Right ventricle myocardium inferior (tissue), 1 donor: ENCODE measurements at regions of chr5 and their contacts with region 1.

Region 1: DNA sequence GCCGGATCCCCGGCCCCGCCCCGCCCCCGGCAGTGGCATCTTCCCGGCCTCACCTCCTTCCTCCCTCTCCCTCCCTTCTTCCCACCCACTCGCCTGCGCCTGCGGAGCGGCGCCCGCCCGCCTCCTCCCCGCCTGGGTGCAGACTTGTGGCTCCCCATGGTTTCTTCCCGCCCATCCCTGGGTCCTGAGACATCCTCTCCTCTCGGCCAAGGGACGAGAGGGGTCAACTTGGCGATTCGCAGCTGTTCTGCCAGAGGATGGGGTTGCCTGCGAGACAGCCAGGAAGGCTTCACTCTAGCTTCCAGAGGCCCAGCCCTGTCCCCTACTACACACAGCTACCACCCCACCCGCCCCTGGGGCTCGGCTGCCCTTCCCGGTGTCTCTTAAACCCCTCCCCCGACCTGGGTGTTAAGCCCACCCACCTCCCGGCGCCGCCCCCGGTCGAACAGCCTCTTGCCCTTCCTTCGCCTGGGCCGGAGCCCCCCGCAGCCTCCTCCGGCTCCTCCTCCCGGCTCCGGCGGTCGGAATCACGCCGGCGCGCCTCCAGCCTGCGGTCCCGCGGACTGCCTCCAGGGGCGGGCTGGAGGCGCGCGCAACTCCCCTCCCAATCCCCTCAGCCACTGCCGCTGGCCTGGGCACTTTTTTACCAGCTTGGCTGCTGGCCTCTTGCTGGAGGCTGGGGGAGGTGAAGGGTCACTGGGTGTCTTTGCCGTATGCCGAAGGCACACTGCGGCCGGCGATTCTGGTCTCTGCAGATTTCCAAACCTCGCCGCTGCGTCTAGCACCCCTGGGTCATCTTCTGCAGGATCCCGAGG is 1.9 kb downstream of the JADE2 start:
- DNase-seq: peak; percentile 93
- ATAC-seq: peak; percentile 67

Region 2: DNA sequence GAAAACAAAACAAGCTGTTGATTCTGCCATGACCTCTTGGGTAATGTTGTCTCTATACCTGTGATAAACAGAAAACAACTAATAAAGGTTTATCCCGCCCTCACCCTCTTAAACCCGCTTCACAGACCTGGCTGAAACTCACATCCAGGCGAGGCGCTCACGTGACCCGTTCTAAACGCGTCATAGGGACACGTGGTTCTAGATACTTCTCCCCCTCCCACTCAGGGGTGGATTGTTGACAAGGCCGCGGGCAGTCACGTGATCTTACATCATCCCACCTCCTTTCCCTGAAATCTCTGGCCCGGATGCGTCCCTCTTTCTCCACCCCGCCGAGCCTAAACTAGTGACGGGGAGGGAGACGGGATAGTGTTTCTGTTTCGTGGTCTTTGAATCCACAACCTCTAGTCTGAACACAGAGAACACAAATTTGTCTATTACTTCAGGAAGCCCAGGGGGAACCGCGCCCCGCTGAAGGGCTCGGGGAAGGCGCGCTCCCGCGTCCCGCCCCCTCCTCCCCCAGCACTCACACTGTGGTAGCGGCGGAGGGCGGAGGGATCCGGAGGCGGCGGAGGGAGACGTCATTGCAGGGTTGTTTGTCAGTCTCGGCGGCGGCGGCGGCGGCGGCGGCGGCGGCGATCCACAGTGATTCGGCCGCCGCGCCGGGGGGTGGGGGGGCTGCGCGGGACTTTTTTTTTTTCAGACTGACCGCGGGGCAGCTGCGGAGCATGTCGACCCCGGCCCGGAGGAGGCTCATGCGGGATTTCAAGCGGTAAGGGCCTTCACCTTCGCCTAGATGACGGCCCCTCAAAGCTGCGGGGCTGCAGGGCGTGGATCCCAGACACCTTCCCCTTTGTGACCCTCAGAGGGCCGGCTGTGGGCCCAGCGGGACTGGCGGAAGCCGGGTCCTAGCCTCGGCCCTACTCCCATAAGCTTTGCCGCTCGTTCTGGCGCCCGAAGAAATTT is 156.2 kb before region 1 on chr5 and contains the start of gene UBE2B:
- intact Hi-C with region 1: loop called (anchors 2 kb)
- DNase-seq: peak; percentile 98
- ATAC-seq: peak; percentile 94
- total RNA-seq, gene UBE2B: 258 TPM

Region 3: DNA sequence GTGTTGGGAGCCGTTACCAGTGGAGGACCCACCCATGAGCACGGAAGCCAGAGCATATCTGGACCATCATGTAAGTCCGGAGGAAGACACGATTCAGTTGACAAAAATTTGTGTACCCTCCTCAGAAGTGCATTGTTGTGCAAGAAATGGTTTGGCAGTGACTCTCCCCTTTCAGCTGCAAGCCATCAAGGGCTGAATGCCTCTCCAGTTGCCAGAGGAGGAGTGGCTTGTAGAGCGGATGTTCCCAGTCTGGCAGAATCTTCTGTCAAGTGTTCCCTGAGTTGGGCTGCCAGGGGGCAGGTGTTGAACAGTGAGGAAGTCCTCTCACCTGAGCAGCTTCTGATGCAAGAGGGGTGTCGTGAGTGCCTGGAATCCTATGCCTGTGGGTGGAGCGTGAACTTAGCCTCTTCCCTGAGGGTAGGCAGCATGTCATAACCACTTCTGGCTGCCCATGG is 88.1 kb before region 1 on chr5:
- intact Hi-C with region 1: loop called (anchors 1 kb)
- DNase-seq: peak; percentile 77
- ATAC-seq: peak; percentile 84

Region 4: DNA sequence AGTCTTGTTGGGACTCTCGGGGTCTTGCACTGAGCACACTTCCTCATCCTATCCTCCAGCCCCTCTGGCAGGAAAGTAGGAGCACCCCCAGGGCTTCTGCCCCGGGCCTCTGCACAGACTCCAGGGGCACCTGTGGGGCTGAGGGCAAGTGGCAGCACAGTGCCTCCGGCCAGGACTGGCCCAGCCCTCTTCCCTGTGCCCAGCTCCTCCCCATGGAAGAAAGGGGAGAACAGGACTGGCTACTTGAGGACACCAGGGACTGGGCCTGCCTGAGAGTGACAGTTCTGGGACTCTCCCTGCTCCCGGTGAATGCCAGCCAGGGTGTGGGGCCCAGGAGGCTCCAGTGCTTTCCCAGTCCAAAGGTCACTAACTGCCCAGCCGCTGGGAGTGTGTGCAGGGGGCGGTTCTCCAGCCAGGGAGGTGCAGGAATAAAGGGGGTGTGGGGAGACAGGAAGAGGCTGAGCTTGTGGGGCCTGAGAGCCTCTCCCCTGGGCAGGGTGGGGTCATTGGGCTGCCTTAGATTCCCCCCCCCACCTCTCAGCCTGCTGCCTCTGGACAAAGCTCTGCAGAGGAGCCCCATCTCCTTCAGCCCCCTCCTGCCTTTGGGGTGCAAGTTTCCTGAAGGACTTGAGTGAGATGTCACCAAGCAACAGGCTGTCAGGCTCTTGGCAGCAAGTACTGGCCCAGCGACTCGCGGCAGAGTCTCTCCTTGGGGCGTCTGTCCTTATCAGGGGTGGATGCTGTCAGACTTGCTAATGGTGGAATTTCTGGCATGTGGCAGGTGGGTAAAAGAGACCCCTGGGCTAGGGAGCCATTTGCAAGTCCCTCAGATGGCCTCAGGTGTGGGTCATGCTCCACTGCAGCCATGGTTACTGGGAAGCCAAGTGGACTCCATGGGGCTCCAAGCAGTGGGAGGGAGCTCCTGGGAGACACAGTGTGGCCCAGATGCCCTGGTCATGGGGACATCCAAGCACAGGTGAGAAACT is 21.0 kb before region 1 on chr5:
- intact Hi-C with region 1: loop called (anchors 2 kb)
- DNase-seq: peak; percentile 84
- ATAC-seq: peak; percentile 93

Region 5: DNA sequence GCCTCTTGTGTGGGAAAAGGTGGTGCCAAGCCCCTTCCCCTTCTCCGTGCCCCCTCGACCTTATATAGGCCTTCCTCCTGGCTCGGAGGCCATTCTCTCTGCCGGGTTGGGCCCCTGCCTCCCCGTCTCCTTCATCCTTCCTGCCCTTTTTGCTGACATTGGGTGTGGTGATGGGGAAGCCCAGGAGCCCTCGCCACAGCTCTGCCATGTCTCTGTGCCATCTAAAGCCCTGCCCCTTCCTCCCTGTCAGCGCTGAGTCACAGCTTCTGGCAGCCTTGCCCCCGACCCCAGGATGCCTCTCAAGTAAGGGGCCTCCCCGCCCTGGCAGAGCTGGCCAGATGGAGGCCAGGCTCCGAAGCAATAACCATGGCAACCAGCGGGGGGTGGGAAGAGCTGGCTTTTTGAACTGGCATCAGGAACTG is 28.5 kb after region 1 on chr5:
- intact Hi-C with region 1: loop called (anchors 2 kb)
- DNase-seq: peak; percentile 85
- ATAC-seq: no peak

Region 6: GRCh38 chr5:134724872-134725271 is 197.5 kb after region 1 on chr5:
- intact Hi-C with region 1: no loop called
- DNase-seq: no peak
- ATAC-seq: no peak

Region 7: DNA sequence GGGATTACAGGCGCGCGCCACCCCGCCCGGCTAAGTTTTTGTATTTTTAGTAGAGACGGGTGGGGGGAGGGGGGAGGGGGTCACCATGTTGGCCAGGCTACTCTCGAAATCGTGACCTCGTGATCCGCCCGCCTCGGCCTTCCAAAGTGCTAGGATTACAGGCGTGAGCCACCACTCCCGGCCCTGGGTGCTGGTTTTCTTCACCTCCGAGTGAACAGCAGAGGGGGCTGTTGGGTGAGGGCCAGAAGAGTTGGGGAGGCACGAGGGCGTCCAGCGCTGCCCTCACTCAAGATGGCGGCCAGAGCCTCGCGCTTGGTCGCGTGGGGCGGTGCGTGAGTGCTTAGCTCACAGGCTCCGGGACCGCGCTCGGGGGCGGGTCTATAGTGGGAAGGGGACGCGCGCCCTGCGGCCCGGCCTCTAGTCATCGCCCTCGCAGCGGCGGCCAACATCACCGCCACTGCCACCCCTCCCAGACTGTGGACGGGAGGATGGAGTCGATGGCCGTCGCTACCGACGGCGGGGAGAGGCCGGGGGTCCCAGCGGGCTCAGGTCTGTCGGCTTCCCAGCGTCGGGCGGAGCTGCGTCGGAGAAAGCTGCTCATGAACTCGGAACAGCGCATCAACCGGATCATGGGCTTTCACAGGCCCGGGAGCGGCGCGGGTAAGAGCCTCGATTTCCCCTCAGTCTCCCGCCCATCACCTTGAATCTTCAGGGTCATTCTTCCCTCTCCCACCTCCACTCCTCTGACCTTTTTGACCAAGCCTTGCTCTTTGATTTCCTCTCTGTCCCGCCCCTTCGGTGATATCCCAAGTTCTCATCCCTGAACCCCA is 211.0 kb after region 1 on chr5 and contains the start of gene CAMLG:
- intact Hi-C with region 1: no loop called
- DNase-seq: peak; percentile 100
- ATAC-seq: peak; percentile 100
- total RNA-seq, gene CAMLG: 14.5 TPM